ENCODE measurements at regions of chr1 and their contacts with region 1.

Region 1: DNA sequence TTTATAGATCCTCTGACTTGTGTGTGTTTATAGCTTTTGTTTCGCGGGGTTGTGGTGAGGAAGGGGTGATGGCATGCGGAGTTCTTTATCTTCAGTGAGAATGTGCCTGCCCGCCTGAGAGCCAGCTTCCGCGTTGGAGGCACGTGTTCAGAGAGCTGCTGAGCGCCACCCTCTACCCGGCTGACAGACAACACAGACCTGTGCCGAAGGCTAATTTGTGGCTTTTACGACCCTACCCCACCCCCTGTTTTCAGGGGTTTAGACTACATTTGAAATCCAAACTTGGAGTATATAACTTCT is 14.4 kb upstream of the CD101 start:
- DNase-seq: peak; percentile 83
- H3K4me3 Mint-ChIP-seq: peak overlapping the region; percentile 68
- H3K27ac Mint-ChIP-seq: peak overlapping the region; percentile 91
- H3K4me1 Mint-ChIP-seq: peaks cover 60% of the 10 kb centered on the region
- H3K27me3 Mint-ChIP-seq: no peaks in the 10 kb centered on the region

Region 2: GRCh38 chr1:116909510-116910378 is 77.5 kb before region 1 on chr1 and contains the start of gene PTGFRN:
- CTCF ChIA-PET with region 1: no interaction called
- intact Hi-C with region 1: loop called (anchors 5 kb)
- DNase-seq: peak; percentile 53
- H3K4me3 Mint-ChIP-seq: peak within 1 kb of the TSS; percentile 75
- H3K27ac Mint-ChIP-seq: peak within 1 kb of the TSS; percentile 30
- H3K4me1 Mint-ChIP-seq: peaks cover 3% of the 10 kb centered on the region
- H3K27me3 Mint-ChIP-seq: no peaks in the 10 kb centered on the region
- total RNA-seq, gene PTGFRN: 24.0 to 28.0 TPM

Region 3: DNA sequence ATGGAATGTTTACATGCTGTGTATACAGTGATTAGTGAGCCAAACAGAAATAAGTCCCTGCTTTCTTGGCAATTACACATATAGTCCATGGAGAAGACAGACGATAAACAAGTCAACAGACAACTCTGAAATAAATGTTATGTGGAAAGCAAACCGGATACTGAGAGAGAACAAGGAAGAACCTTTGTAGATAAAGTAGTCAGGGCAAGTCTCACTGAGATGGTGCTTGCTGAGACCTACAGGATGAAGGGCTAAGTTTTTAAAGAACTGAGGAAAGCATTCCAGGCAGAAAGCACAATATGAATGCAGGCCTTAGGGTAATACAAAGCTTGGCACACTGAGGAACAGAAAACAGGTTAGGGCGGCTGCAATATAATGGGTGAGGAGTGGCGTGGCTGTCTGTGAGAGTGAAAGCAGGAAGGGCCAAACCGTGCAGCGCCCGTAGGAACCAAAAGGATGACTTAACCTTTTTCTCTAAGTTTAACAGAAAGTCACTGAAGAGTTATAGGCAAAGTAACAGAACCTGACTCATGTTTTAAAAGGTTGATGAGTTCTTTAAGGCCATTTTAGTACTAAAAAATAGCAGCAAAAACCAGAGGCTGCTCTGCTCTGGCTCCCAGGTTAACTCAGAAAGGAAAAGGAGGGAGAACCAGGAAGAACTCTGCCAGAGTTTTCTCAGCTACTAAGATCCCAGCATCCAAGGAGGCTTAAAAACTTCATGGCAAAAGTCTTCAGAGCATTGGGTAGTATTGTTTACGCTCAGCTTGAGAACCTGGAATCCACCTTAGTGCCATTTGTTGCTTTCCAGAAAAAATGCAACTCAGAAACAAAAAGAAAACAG is 64.2 kb after region 1 on chr1:
- CTCF ChIA-PET with region 1: interaction called, 3 read pairs
- intact Hi-C with region 1: loop called (anchors 1 kb)
- DNase-seq: peak; percentile 69
- H3K4me3 Mint-ChIP-seq: peak overlapping the region; percentile 45
- H3K27ac Mint-ChIP-seq: peak overlapping the region; percentile 28
- H3K4me1 Mint-ChIP-seq: peaks cover 61% of the 10 kb centered on the region
- H3K27me3 Mint-ChIP-seq: no peaks in the 10 kb centered on the region

Measured in activated naive CD4-positive, alpha-beta T cell treated with anti-CD3 and anti-CD28 coated beads for 36 hours (primary cell).